ENCODE measurements at regions of chr15 and their contacts with region 1.

Region 1: GRCh38 chr15:77024271-77025082 is 29.6 kb downstream of the PSTPIP1 start:
- DNase-seq: peak; percentile 79
- ATAC-seq: peak; percentile 20
- H3K4me3 Mint-ChIP-seq: no peak overlapping the region
- H3K27ac Mint-ChIP-seq: peak overlapping the region; percentile 99
- H3K4me1 Mint-ChIP-seq: peaks cover 61% of the 10 kb centered on the region
- H3K27me3 Mint-ChIP-seq: no peaks in the 10 kb centered on the region

Region 2: DNA sequence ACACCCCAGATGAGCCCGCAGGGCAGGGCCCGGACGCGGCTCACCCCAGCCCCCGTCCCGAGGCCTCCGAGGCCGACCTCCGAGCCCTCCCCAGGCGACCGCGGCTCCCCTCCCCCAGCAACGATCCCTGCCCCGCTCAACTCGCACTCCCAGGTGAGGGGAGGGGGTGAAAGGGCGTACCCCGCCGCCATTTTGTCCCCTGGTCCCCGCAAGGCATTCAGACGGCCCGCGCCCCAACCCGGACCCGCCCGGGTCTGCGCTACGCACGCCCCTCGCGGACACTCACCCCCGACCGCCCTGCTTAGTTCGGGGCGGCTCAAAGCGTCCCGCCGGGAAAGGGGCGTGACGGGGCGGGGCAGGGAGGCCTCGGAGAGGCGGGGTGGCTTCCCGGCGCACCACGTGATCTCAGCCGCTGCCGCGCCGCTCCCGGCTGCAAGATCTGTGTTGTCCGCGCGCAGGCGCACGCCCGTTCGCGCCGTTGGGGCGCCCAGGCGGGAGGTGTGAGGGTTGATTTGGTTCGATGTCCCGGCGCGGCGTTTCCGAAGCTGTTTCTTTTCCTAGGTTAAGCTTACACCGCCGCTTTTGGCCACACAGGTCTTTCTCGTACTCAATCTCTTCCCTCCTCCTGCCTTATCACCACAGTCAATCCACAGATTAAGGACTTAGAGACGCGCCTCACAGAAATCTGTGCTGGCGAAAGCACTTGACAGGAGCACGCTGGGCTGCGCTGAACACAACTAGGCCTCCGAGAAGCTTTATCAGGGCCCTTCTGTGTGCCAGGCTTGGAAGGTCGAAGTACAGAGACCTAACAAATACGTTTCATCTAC is 119.3 kb before region 1 on chr15 and contains the start of gene SCAPER:
- CTCF ChIA-PET with region 1: no interaction called
- DNase-seq: peak; percentile 94
- ATAC-seq: peak; percentile 93
- H3K4me3 Mint-ChIP-seq: peak within 1 kb of the TSS; percentile 83
- H3K27ac Mint-ChIP-seq: peak within 1 kb of the TSS; percentile 85
- H3K4me1 Mint-ChIP-seq: peaks cover 31% of the 10 kb centered on the region
- H3K27me3 Mint-ChIP-seq: peaks cover 4% of the 10 kb centered on the region
- total RNA-seq, gene SCAPER: 20.4 to 29.5 TPM

Region 3: GRCh38 chr15:76987926-76988860 is 36.3 kb before region 1 on chr15:
- CTCF ChIA-PET with region 1: interaction called, 103 read pairs
- DNase-seq: peak; percentile 93
- ATAC-seq: peak; percentile 90
- H3K4me3 Mint-ChIP-seq: peak overlapping the region; percentile 49
- H3K27ac Mint-ChIP-seq: peak overlapping the region; percentile 100
- H3K4me1 Mint-ChIP-seq: peaks cover 60% of the 10 kb centered on the region
- H3K27me3 Mint-ChIP-seq: no peaks in the 10 kb centered on the region

Region 4: DNA sequence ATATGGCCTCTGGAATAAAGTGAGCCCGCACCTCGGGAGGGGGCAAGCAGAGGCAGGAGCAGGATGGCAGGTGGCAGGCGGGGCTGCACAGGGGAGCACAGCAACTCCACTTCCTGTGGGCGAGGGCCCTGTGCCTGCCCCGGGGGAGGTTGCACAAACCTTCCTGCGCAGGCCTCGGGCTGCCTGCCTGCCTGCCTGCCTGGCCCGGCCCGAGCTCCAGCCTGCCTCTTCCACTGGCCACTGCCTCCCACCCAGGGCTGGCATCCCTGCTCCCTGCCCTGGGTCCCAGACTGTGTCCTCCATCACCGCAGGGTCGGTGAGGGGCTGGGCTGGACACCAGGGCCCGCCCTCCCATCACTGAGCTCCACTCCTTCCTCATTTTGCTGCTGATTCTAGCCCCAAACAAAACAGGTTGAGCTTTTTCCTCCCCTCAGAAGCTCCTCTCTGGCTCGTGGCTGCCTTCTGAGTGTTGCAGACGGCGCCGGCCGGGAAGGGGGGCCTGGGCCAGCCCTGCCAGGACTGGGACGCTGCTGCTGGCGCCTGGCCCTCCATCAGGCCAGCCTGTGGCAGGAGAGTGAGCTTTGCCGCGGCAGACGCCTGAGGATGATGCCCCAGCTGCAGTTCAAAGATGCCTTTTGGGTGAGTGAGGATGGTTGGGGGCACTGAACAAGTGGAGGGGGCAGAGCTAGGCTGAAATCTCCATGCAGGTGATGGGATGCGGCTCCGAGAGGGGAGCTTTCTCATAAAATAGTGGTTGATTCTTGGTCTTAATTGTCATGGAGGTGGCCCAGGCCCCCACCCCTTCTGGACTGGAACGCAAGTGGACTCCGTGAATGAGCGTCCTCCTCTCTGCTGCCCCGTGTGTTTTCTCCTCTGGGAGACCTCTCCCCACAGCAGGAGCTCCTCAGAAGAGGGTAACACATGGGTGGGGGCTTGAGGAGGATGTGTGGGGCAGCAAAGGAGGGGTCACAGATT is 29.2 kb before region 1 on chr15 and contains the start of gene PSTPIP1:
- CTCF ChIA-PET with region 1: interaction called, 103 read pairs
- DNase-seq: peak; percentile 88
- ATAC-seq: peak; percentile 74
- H3K4me3 Mint-ChIP-seq: peak within 1 kb of the TSS; percentile 97
- H3K27ac Mint-ChIP-seq: peak within 1 kb of the TSS; percentile 98
- H3K4me1 Mint-ChIP-seq: peaks cover 65% of the 10 kb centered on the region
- H3K27me3 Mint-ChIP-seq: no peaks in the 10 kb centered on the region
- total RNA-seq, gene PSTPIP1: 157 to 255 TPM

Region 5: GRCh38 chr15:77002954-77003912 is 21.2 kb before region 1 on chr15:
- CTCF ChIA-PET with region 1: interaction called, 103 read pairs
- DNase-seq: peak; percentile 91
- ATAC-seq: peak; percentile 75
- H3K4me3 Mint-ChIP-seq: peak overlapping the region; percentile 62
- H3K27ac Mint-ChIP-seq: peak overlapping the region; percentile 87
- H3K4me1 Mint-ChIP-seq: peaks cover 90% of the 10 kb centered on the region
- H3K27me3 Mint-ChIP-seq: no peaks in the 10 kb centered on the region

Region 6: GRCh38 chr15:77013776-77014131 is 10.7 kb before region 1 on chr15:
- CTCF ChIA-PET with region 1: interaction called, 26 read pairs
- DNase-seq: peak; percentile 97
- ATAC-seq: peak; percentile 83
- H3K4me3 Mint-ChIP-seq: peak overlapping the region; percentile 70
- H3K27ac Mint-ChIP-seq: peak overlapping the region; percentile 99
- H3K4me1 Mint-ChIP-seq: peaks cover 98% of the 10 kb centered on the region
- H3K27me3 Mint-ChIP-seq: no peaks in the 10 kb centered on the region

Region 7: DNA sequence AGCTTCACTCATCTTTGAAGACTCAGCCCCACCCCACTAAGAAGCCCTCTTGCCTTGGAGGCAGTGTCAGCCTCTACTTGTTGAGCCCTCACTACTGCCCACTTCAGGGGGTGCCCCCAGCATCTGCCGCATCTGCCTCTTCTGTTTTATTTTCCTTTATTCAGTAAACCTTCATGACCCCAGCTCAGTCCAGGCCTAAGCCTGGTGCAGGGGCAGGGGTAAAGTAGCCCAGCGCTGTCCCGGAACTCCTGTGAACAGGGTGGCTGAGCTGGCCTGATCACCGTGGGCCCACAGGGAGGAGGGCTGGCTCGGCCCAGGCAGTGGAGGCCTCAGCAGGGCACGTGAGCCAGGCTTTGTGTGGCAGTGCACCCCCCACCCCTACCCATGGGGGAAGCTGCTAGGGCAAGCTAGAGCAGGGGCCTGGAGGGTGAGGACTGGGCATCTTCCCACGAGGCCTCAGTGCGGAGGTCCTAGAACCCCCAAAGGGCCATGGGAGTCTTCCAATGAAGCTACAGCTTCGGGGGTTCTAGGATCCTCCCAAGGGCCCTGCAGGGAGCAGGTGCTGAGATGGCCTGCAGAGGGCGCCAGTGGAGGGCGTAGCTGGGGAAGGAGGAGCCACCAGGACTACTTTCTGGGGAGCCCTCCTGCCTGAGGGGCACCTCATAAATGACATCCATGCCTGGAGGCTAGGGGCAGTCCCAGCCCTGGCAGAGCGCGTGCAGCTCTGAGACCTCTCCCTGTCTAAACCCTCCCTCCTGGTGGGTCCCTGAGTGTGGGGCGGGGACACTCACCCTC is 10.4 kb after region 1 on chr15:
- CTCF ChIA-PET with region 1: interaction called, 29 read pairs
- DNase-seq: peak; percentile 42
- ATAC-seq: no peak
- H3K4me3 Mint-ChIP-seq: no peak overlapping the region
- H3K27ac Mint-ChIP-seq: no peak overlapping the region
- H3K4me1 Mint-ChIP-seq: peaks cover 13% of the 10 kb centered on the region
- H3K27me3 Mint-ChIP-seq: no peaks in the 10 kb centered on the region